Mammary epithelial cell (primary cell): ENCODE measurements at regions of chr13 and their contacts with region 1.

Region 1: GRCh38 chr13:100100115-100100879 is 11.4 kb downstream of the PCCA start:
- DNase-seq: peak; percentile 80
- H3K4me3 ChIP-seq: peak overlapping the region in 2 of 3 experiments; percentile 0 to 3
- H3K27ac ChIP-seq: peak overlapping the region; percentile 68
- H3K4me1 ChIP-seq: peaks cover 11% of the 10 kb centered on the region
- H3K27me3 ChIP-seq: no peaks in the 10 kb centered on the region
- CTCF ChIP-seq: no peak

Region 2: DNA sequence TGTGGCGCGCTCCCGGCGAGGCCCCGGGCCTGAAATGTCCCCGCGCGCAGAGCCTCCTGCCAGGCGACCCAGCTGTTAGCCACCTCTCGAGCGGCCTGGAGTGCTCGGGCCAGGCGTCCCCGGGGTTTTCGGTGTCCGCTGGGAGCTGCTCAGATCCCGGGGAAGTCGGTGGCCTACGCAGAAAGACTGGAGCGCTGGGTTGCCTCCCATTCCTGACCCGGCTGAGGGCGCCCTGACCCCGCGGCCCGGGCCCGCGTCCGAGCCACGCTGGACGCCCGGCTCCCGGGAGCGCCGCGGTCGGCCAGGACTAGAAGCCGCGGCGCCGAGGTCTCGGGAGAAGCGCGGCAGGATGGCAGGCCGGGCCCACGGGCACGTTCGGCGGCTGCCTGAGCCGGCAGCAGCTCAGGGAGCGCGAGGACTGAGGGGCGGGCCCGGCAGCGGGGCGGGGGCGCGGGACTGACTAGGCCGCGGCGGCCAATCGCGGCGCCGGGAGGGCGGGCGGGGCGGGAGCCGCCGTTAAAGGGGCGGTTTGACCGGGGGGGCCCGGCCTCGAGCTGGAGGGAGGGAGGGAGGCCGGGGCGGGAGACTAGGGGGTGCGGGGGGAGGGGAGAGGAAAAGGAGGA is 120.0 kb before region 1 on chr13:
- CTCF ChIA-PET with region 1: no interaction called
- dilution Hi-C with region 1: no loop called
- in situ Hi-C with region 1: no loop called
- intact Hi-C with region 1: loop called (anchors 10 kb)
- DNase-seq: peak; percentile 76
- H3K4me3 ChIP-seq: peak overlapping the region; percentile 40 to 61 (median 58)
- H3K27ac ChIP-seq: no peak overlapping the region
- H3K4me1 ChIP-seq: peaks cover 20% of the 10 kb centered on the region
- H3K27me3 ChIP-seq: peaks cover 58% of the 10 kb centered on the region
- CTCF ChIP-seq: no peak